GM10248 (cell line): ENCODE measurements at regions of chr12 and their contacts with region 1.

Region 1: DNA sequence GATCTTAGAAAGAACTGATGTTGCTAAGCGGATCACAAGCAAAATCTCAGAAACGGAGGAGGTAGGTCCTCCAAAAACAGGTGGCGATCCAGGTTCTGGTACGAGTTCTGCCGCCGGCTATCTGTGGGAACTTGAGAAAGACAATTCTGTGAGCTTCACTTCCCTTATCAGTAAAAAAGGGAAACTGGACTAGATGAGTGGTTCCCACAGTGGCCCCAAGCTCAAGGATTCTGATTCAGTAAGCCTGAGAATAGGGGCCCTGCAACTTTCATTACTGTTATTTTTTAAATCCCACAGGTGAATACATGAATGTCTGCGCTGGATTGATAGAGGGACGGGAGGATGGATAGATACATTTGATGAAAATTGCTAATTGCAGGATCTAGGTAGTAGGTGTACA is 160.2 kb downstream of the PPM1H start:
- DNase-seq: peak; percentile 20
- CTCF ChIP-seq: no peak

Region 2: GRCh38 chr12:62731055-62731820 is 43.6 kb before region 1 on chr12:
- CTCF ChIA-PET with region 1: no interaction called
- POLR2A ChIA-PET with region 1: no interaction called
- DNase-seq: no peak
- CTCF ChIP-seq: no peak

Region 3: DNA sequence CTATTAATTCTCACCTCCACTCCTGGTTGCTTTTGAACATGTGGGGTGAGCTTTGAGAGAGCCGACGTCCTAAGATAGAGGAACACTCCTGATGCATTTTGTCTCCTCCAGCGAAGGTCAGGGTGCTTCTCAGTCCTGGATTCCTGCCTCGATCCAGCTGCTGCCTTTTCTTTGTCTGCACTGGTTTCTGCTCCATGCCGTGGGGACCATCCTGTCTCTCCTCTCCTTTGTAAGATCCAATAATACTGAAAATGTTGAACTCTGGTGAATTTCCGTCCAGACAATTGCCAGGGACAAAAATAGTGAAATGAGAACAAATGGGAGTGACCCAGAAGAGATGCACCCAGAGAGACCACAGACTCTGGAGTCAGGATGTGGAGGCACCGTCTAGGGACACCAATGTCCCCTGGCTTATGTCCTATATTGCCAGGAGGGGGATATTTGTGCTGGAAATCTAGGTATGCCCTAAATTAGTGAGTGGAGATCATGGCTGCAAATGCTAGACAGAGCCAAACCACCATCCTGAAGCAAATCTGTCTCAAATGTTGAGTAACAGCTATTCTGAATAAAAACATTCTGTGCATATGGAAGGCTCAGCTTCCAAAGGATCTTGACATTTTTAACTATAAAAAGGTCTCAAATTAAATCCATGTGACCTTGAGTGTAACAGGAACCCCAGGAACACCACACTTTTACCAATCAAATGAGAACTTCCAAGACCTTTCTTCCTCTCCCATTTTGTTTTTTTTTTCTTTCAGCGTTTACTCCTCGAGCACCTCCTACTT is 10.7 kb before region 1 on chr12:
- CTCF ChIA-PET with region 1: interaction called, 10 read pairs
- POLR2A ChIA-PET with region 1: no interaction called
- DNase-seq: no peak
- CTCF ChIP-seq: no peak